ENCODE measurements at regions of chr2 and their contacts with region 1.

Region 1: DNA sequence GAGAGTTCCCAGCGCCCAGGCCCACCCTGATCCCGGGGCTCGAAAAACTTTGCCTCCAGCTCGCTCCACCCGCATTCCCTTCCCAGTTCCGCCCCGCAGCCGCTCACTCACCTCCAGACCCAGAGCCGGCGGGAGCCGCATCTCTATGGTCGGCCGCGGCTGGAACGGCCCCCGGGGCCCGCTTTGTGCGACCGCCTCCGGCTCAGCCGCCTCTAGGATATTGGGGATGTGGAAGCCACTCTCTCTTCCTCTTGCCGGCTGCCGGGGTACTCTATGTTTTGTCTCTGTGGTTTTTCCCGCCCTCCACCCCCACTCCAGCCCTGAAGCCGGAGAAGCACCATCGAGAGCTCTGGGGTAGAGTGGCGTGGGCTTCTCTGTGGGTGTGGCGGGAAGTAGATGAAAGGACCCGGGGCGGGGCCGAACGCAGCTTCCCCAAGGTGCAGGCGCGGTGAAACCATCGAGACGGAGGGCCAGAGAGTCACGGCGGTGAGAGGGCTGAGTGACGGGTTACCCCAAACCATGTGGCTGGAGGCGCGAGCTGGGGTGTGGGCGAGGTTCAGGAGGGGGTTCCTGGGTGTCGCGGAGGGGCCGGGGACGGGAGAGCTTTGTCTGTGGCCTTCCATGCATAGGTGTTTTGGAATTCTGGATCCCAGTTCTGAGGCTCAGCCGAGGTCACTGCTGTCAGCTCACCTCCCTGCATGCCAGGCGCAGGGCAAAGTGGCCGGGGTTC is at the starts of genes BCS1L and ZNF142:
- DNase-seq: peak; percentile 95
- H3K4me3 Mint-ChIP-seq: peak within 1 kb of the TSS; percentile 97
- H3K27ac Mint-ChIP-seq: peak within 1 kb of the TSS; percentile 84
- H3K4me1 Mint-ChIP-seq: peaks cover 43% of the 10 kb centered on the region
- H3K27me3 Mint-ChIP-seq: no peaks in the 10 kb centered on the region
- total RNA-seq, gene BCS1L: 35.0 to 39.8 TPM
- total RNA-seq, gene ZNF142: 41.4 to 41.8 TPM

Region 2: GRCh38 chr2:218568190-218569037 is 91.0 kb before region 1 on chr2 and contains the starts of genes CNOT9 and USP37:
- CTCF ChIA-PET with region 1: no interaction called
- POLR2A ChIA-PET with region 1: interaction called, 19 read pairs
- DNase-seq: peak; percentile 100
- H3K4me3 Mint-ChIP-seq: peak within 1 kb of the TSS; percentile 93
- H3K27ac Mint-ChIP-seq: peak within 1 kb of the TSS; percentile 99
- H3K4me1 Mint-ChIP-seq: peaks cover 63% of the 10 kb centered on the region
- H3K27me3 Mint-ChIP-seq: no peaks in the 10 kb centered on the region
- total RNA-seq, gene CNOT9: 77.1 to 77.3 TPM
- total RNA-seq, gene USP37: 30.2 to 32.7 TPM

Region 3: GRCh38 chr2:218648088-218648786 is 11.2 kb before region 1 on chr2:
- CTCF ChIA-PET with region 1: interaction called, 63 read pairs
- POLR2A ChIA-PET with region 1: interaction called, 22 read pairs
- DNase-seq: peak; percentile 67
- H3K4me3 Mint-ChIP-seq: no peak overlapping the region
- H3K27ac Mint-ChIP-seq: no peak overlapping the region
- H3K4me1 Mint-ChIP-seq: peaks cover 1% of the 10 kb centered on the region
- H3K27me3 Mint-ChIP-seq: no peaks in the 10 kb centered on the region

Region 4: DNA sequence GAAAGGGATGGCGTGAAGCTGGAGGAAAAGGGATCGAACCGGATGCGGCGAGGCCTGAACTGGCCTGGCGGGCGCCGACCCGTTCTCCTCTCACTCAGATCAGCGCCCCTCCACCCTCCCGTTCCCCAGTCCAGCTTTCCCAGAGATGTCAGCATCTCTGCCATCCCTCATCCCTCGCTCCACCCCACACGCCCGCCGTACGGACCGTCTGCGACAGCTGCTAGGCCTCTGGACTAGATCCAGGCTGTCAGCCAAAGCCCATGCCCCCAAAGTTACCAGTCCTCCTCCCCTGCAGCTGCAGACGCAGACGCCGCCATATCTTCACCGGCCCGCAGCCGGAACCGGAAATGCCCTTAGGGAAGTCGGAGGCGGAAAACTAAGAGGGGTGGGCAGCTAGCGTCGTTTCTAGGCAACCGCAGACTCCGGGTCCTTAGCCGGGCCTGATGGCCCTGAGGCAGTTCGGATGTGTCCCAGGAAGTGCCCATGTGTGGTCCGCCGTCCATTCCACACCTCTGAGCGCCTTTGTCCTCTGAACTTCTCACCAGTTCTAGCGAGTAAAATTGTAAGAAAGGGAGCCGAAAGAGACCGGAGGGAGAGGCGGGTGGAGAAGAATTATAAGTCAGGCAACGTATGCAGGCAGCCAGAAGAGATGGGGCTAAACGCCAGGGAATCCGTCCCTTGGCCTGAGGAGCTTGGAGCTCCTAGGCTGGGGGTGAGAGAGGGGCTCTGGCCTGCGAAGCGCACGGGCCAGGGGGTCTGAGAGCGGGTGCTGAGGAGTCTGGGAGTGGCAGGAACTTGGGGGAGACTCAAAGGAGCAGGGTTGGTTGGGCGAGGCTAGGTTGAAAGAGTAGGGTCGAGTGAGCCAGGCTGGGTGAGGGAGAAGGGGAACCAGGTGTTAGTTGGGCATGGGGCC is 12.5 kb after region 1 on chr2 and contains the starts of genes RNF25 and STK36:
- CTCF ChIA-PET with region 1: interaction called, 47 read pairs
- POLR2A ChIA-PET with region 1: interaction called, 76 read pairs
- DNase-seq: peak; percentile 85
- H3K4me3 Mint-ChIP-seq: peak within 1 kb of the TSS; percentile 97
- H3K27ac Mint-ChIP-seq: peak within 1 kb of the TSS; percentile 88
- H3K4me1 Mint-ChIP-seq: peaks cover 27% of the 10 kb centered on the region
- H3K27me3 Mint-ChIP-seq: no peaks in the 10 kb centered on the region
- total RNA-seq, gene RNF25: 15.1 to 21.9 TPM
- total RNA-seq, gene STK36: 17.6 to 17.9 TPM

Region 5: DNA sequence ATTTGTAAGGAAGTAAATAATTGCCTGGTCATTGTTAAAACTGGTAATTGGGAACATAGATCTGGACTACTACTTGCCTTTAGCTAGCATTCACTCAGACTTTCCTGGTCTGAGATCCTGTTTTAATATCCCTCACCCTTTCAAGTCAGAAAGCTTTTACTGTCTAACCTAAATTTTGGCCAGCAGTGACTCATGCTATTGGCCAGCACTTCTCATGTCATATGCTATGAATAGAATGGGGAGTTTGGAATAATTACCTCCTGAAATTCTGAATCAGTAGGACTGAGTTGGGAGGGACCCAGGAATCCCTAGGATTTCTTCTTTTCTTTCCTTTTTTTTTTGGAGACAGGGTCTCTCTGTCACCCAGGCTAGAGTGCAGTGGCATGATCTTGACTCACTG is 31.8 kb after region 1 on chr2:
- CTCF ChIA-PET with region 1: interaction called, 27 read pairs
- POLR2A ChIA-PET with region 1: interaction called, 9 read pairs
- DNase-seq: no peak
- H3K4me3 Mint-ChIP-seq: no peak overlapping the region
- H3K27ac Mint-ChIP-seq: no peak overlapping the region
- H3K4me1 Mint-ChIP-seq: no peaks in the 10 kb centered on the region
- H3K27me3 Mint-ChIP-seq: no peaks in the 10 kb centered on the region

Region 6: DNA sequence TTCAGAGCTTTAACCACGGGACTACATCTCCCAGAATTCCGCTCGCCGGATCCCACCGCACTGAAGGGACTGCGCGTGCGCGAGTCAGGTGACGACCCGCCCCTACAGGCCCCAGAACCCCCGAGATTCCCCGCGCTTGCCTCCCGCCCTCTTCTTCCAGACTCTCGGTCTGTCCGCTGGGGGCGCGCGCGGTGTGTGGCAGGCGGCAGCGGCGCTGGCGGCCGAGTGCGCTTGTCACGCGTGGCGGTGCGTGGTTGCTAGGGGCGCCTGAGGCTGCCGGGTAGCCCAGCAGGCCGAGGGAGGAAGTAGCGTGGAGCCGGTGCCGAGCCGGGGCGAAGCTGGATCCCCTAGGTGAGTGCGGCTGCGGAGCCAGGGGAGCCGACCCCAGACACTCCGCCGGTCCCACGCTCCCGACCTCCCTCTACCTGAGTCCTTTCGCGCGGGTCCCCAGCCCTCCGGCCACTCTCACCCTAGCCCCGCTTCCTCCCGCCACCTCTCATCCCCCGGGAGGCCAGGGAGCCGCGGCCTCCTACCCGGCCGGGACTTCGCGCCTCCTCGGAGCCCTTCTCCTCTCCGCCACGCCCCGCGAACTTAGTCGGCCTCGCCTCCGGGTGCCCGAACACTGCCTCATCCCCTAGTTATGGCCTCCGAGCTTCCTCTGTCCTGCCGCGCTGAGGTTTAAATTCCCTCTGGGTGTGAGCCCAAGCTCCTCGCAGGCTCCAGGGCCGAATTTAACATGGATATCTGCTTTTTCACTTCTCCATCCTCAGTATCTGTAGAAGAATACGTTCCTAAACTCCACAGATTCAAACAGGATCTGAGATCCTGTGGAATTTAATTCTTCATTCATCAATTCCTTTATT is 51.5 kb after region 1 on chr2 and contains the start of gene TTLL4:
- CTCF ChIA-PET with region 1: interaction called, 32 read pairs
- POLR2A ChIA-PET with region 1: interaction called, 18 read pairs
- DNase-seq: peak; percentile 98
- H3K4me3 Mint-ChIP-seq: peak within 1 kb of the TSS; percentile 93
- H3K27ac Mint-ChIP-seq: peak within 1 kb of the TSS; percentile 79
- H3K4me1 Mint-ChIP-seq: peaks cover 62% of the 10 kb centered on the region
- H3K27me3 Mint-ChIP-seq: no peaks in the 10 kb centered on the region
- total RNA-seq, gene TTLL4: 27.6 to 29.2 TPM

Region 7: DNA sequence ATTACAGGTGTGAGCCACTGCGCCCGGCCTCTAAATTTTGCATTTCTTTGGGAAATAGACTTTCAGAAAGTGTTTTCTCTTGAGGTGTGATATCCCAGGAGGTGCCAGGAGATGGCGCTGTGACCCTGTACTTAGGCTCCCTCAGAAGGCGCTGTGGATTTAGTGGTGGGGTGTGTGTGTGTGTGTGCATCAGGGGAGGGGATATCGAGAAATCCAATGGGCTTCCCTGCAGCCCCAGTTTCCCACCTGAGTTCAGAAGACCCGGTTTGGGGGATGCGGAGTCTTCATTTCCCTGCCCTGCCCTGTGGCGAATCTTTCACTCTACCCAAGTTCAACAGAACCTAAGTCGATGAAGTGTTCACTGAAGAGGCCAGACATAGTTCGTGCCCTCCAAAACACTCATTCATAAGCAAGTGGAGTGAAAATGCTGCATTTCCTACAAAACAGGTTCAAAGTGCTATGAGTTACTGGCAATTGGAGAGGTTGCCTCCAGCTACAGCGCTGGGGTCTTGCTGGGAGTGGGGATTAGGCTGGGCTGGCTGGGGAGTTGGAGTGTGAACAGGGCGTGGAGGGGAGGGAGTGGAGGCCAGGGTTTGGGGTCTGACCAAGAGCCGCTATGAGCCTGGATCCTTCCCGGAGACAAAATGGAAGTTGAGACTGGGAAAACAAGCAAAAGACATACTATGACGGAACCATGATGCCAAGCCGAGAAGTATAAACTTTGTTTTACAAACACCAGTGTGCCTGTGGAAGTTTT is 193.7 kb after region 1 on chr2:
- CTCF ChIA-PET with region 1: interaction called, 51 read pairs
- POLR2A ChIA-PET with region 1: interaction called, 5 read pairs
- DNase-seq: peak; percentile 65
- H3K4me3 Mint-ChIP-seq: no peak overlapping the region
- H3K27ac Mint-ChIP-seq: no peak overlapping the region
- H3K4me1 Mint-ChIP-seq: no peaks in the 10 kb centered on the region
- H3K27me3 Mint-ChIP-seq: peaks cover 55% of the 10 kb centered on the region

Region 8: GRCh38 chr2:218993345-218994315 is 334.2 kb after region 1 on chr2 and contains the start of gene CRYBA2:
- CTCF ChIA-PET with region 1: no interaction called
- POLR2A ChIA-PET with region 1: no interaction called
- DNase-seq: no peak
- H3K4me3 Mint-ChIP-seq: no peak within 1 kb of the TSS
- H3K27ac Mint-ChIP-seq: no peak within 1 kb of the TSS
- H3K4me1 Mint-ChIP-seq: peaks cover 8% of the 10 kb centered on the region
- H3K27me3 Mint-ChIP-seq: peaks cover 86% of the 10 kb centered on the region
- total RNA-seq, gene CRYBA2: not detected

Measured in activated CD4-positive, alpha-beta memory T cell treated with anti-CD3 and anti-CD28 coated beads, Interleukin-2, amount 10 ng/mL, durations not matched to agents 7 days and 5 days (primary cell).